ENCODE measurements at regions of chr16 and their contacts with region 1.

Region 1: GRCh38 chr16:87778830-87779579 is 13.2 kb upstream of the KLHDC4 start:
- DNase-seq: peak; percentile 92
- ATAC-seq: peak; percentile 93 to 94

Region 2: DNA sequence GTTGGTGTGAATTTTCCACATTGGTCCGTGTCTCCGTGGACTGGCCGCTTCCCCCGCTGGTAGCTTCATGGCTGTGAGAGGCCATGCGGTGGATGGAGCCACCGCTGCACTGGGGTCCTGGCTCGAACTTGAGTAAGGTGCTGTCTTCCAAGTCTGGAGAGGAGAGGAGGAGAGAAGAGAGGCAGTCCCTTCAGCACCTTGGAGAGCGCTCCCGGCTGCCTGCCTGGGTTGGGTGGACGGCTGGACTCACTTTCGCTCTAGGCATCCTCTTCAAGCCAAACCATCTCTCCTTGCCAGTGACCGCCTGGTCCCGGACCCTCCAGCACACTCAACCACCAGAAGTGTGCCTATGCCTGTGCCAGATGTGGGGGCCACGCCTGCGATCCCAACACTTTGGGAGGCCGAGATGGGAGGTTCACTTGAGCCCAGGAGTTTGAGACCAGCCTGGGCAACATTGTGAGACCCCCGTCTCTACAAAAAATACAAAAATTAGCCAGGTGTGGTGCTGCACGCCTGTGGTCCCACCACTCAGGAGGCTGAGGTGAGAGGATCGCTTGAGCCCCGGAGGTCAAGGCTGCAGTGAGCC is 170.5 kb before region 1 on chr16:
- intact Hi-C with region 1: no loop called
- DNase-seq: peak; percentile 68
- ATAC-seq: peak; percentile 49 to 50

Region 3: GRCh38 chr16:87874639-87875465 is 95.8 kb after region 1 on chr16:
- intact Hi-C with region 1: loop called (anchors 1 to 2 kb)
- DNase-seq: no peak
- ATAC-seq: no peak

Region 4: DNA sequence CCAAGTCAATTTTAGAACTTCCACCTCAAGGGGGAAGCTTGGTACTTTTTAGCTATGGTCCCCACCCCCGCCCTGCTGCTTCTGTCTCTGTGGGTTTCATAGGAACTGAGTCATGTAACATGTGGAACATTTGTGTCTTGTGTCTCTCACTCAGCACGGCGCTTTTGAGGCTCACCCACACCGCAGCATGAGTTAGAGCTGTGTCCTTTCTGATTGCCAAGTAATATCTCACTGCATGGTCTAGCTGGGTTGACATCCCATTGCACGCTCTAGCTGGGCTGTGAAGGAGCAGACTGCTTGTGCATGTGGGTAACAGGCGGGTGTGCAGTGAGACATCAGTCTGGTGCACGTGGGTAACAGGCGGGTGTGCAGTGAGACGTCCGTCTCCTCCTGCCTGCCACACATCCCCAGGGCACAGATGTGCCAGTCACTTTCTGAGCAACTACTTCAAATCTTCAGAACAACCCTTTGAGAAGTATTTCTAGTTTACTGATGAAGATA is 116.7 kb after region 1 on chr16:
- intact Hi-C with region 1: loop called in 1 of 2 experiments (anchors 10 kb)
- DNase-seq: no peak
- ATAC-seq: peak in 1 of 2 donors; percentile 38

Measured in left cardiac atrium (tissue), 4 donors.